Psoas muscle (tissue), 8 donors: ENCODE measurements at regions of chr7 and their contacts with region 1.

Region 1: DNA sequence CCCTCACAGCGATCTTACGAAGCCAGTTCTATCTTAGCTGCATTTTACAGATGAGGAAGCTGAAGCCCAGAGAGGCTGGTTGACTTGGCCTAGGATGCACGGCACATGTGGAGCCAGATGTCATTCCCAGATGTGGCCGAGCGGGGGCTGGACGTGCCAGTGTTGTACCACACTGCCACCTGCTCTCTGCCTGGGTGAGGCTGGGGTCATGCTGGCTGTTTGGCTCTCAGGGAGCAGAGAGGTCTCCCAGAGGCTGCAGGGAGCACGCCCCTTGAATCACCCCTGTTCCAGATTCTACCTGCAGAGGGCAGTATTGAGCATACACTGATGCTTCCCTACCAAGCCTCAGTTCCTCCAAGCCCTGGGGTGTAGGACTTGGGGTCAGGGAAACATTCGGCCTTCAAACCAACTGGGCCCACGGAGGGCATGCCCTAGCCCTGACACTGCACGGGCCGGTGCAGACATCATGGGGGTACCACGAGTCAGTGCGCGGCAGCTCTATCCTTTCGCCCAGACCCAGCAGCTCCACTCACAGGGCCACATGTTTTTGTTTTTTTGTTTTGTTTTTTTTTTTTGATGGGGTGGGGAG is 3.8 kb upstream of the GTF2IRD1 start:
- DNase-seq: no peak
- ATAC-seq: peak in 2 of 4 donors; percentile 33 to 36
- H3K4me3 ChIP-seq: no peak overlapping the region
- H3K27ac ChIP-seq: no peak overlapping the region
- H3K4me1 ChIP-seq: no peaks in the 10 kb centered on the region
- H3K27me3 ChIP-seq: no peaks in the 10 kb centered on the region
- CTCF ChIP-seq: peak; percentile 70

Region 2: GRCh38 chr7:74479961-74480829 is 30.3 kb after region 1 on chr7:
- intact Hi-C with region 1: loop called (anchors 2 kb)
- DNase-seq: peak; percentile 90 to 96
- ATAC-seq: peak; percentile 58 to 72 (median 63)
- H3K4me3 ChIP-seq: peak overlapping the region; percentile 58
- H3K27ac ChIP-seq: peak overlapping the region; percentile 96
- H3K4me1 ChIP-seq: peaks cover 67% of the 10 kb centered on the region
- H3K27me3 ChIP-seq: no peaks in the 10 kb centered on the region
- CTCF ChIP-seq: no peak

Region 3: DNA sequence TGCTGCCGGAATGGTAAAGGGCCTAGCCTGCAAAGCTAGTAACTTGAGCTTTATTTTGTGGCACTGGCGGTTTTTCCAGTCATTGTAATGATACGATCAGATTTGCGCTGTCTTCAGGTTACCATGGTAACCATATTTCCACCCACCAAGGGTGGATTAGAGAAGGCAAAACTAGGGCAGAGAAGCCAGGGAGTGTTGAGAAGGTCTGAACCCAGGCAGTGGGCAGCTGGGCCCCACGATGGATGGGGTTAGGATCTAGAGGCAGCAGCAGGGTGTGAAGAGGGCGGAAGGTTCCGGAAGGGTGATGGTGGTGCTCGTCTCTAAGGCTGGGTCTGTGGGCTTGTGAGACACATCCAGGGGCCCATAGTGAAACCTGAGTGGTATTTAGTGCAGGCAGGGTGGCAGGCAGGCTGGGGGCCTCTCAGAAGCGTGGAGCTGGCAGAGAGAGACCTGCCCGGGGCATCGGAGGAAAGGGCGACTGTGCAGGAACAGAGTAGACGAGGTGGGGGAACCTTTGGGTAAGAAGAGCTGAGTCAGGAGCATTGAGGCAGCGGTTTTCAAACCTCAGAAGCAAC is 119.7 kb after region 1 on chr7:
- intact Hi-C with region 1: loop called in 1 of 2 experiments (anchors 10 kb)
- DNase-seq: no peak
- ATAC-seq: no peak
- H3K4me3 ChIP-seq: no peak overlapping the region
- H3K27ac ChIP-seq: no peak overlapping the region
- H3K4me1 ChIP-seq: no peaks in the 10 kb centered on the region
- H3K27me3 ChIP-seq: no peaks in the 10 kb centered on the region
- CTCF ChIP-seq: no peak

Region 4: GRCh38 chr7:74709880-74710671 is 260.2 kb after region 1 on chr7:
- intact Hi-C with region 1: no loop called
- DNase-seq: no peak
- ATAC-seq: no peak
- H3K4me3 ChIP-seq: no peak overlapping the region
- H3K27ac ChIP-seq: no peak overlapping the region
- H3K4me1 ChIP-seq: no peaks in the 10 kb centered on the region
- H3K27me3 ChIP-seq: no peaks in the 10 kb centered on the region
- CTCF ChIP-seq: no peak